PC-3 (cell line): ENCODE measurements at regions of chr14 and their contacts with region 1.

Region 1: DNA sequence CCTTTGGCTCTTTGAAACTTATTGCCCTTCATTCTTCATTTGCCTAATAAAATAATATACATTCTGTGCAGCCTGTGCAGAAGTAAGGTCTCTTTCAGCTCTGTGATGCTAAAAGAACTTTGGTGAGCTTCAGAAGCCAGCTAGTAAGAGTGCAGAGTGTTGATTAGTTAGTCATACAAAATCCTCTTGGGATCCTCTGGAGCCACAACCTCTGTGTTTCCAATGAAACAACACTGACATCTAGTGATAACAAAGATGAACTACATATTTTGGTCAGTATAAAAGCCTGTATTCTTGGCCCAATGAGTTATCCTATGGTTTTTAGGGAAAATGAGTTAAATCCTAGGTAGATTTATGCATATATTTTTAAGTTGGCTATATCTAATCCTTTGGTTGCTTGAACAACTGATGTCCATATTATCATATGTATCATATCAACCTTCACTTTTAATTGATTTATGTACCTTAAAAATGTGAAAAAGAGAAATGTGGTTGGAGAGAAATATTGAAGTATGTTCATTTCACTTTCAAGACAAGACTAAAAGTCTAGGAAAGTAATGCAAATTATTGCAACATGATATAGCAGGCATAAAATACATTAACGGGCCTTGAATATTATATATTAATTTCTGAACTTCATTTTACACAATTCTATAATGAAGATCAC is 158.4 kb downstream of the KLHL28 start:
- DNase-seq: peak; percentile 77
- ATAC-seq: peak; percentile 95
- H3K4me3 ChIP-seq: no peak overlapping the region
- H3K27ac ChIP-seq: no peak overlapping the region
- H3K4me1 ChIP-seq: no peaks in the 10 kb centered on the region
- H3K27me3 ChIP-seq: no peaks in the 10 kb centered on the region
- CTCF ChIP-seq: peak; percentile 90

Region 2: DNA sequence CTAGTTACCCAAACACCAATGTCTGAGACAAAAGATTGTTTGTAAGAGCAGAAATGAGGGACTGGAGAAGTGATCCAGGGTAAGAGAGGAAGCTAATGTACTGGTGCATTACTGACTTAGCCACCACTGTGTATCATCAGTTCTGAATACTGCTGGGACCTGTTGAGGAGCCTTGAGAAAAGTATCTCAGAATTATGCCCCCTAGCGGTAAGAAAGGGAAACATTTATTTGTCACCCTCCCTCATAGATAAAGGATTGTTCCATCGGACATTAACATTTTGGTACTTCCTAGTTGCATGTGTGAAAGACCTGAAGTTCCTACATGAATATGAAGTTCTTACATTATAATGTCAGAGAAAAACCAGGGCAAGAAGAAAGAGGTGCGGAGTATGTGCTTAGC is 908.8 kb before region 1 on chr14:
- CTCF ChIA-PET with region 1: no interaction called
- POLR2A ChIA-PET with region 1: no interaction called
- intact Hi-C with region 1: loop called (anchors 5 kb)
- DNase-seq: peak; percentile 56
- ATAC-seq: peak; percentile 49; the same call in 1 of the 2 replicates
- H3K4me3 ChIP-seq: no peak overlapping the region
- H3K27ac ChIP-seq: no peak overlapping the region
- H3K4me1 ChIP-seq: 0 out of 2 replicates have a peak, but pooled peaks cover 4% of the 10 kb centered on the region
- H3K27me3 ChIP-seq: no peaks in the 10 kb centered on the region
- CTCF ChIP-seq: peak; percentile 83

Region 3: GRCh38 chr14:44846232-44846824 is 43.0 kb after region 1 on chr14:
- CTCF ChIA-PET with region 1: interaction called, 7 read pairs
- POLR2A ChIA-PET with region 1: no interaction called
- intact Hi-C with region 1: loop called (anchors 1 kb)
- DNase-seq: peak; percentile 75
- ATAC-seq: peak; percentile 68
- H3K4me3 ChIP-seq: peak overlapping the region; percentile 6; the same call in 1 of the 2 replicates
- H3K27ac ChIP-seq: no peak overlapping the region
- H3K4me1 ChIP-seq: no peaks in the 10 kb centered on the region
- H3K27me3 ChIP-seq: 0 out of 2 replicates have a peak, but pooled peaks cover 4% of the 10 kb centered on the region
- CTCF ChIP-seq: peak; percentile 96

Region 4: GRCh38 chr14:44963775-44964380 is 160.5 kb after region 1 on chr14:
- CTCF ChIA-PET with region 1: no interaction called
- POLR2A ChIA-PET with region 1: no interaction called
- intact Hi-C with region 1: no loop called
- DNase-seq: peak; percentile 33
- ATAC-seq: peak; percentile 1; the same call in 1 of the 2 replicates
- H3K4me3 ChIP-seq: peak overlapping the region; percentile 89
- H3K27ac ChIP-seq: no peak overlapping the region
- H3K4me1 ChIP-seq: peaks cover 39% of the 10 kb centered on the region
- H3K27me3 ChIP-seq: no peaks in the 10 kb centered on the region
- CTCF ChIP-seq: no peak